CD4-positive, alpha-beta memory T cell (primary cell): ENCODE measurements at regions of chr12 and their contacts with region 1.

Region 1: DNA sequence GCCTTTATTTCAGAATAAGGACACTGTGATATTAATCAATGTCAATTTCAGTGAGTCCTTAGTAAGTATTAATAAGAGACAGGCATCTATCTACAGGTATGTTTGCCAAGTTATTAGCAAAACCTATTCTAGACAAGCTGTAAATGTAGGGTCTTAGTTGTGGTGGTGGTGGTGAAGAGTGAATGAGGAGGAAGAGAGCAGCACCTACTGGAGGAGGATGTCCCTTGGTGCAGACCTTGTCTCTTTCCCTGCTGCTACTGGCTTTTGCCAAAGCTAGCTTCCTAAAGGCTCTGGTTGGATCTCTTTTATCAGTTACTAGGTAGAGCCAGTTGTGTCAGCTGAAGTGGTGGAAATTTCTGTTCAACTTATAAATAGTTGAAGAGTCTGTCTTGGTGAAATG is 304.8 kb upstream of the ATP2B1 start:
- DNase-seq: peak in 4 of 5 donors; percentile 21 to 32 (median 29)
- H3K4me3 ChIP-seq: no peak overlapping the region
- H3K4me3 Mint-ChIP-seq: no peak overlapping the region
- H3K27ac ChIP-seq: no peak overlapping the region
- H3K27ac Mint-ChIP-seq: peak overlapping the region in 2 of 7 donors; percentile 31 to 65
- H3K4me1 ChIP-seq: peaks cover 3% of the 10 kb centered on the region
- H3K4me1 Mint-ChIP-seq: peaks cover 8 to 11% (median 10%) of the 10 kb centered on the region in 4 donors
- H3K27me3 ChIP-seq: no peaks in the 10 kb centered on the region
- H3K27me3 Mint-ChIP-seq: no peaks in the 10 kb centered on the region

Region 2: GRCh38 chr12:89603678-89604077 is 409.7 kb before region 1 on chr12:
- CTCF ChIA-PET with region 1: no interaction called
- POLR2A ChIA-PET with region 1: no interaction called
- intact Hi-C with region 1: loop called (anchors 10 kb)
- DNase-seq: no peak
- H3K4me3 ChIP-seq: no peak overlapping the region
- H3K4me3 Mint-ChIP-seq: no peak overlapping the region
- H3K27ac ChIP-seq: no peak overlapping the region
- H3K27ac Mint-ChIP-seq: peak overlapping the region in 1 of 7 donors; percentile 11
- H3K4me1 ChIP-seq: peaks cover 4% of the 10 kb centered on the region
- H3K4me1 Mint-ChIP-seq: peaks cover 5 to 15% (median 8%) of the 10 kb centered on the region in 4 donors
- H3K27me3 ChIP-seq: no peaks in the 10 kb centered on the region
- H3K27me3 Mint-ChIP-seq: no peaks in the 10 kb centered on the region

Region 3: GRCh38 chr12:90028635-90029051 is 15.2 kb after region 1 on chr12:
- CTCF ChIA-PET with region 1: no interaction called
- POLR2A ChIA-PET with region 1: no interaction called
- intact Hi-C with region 1: no loop called
- DNase-seq: peak in 2 of 5 donors; percentile 1 to 4
- H3K4me3 ChIP-seq: no peak overlapping the region
- H3K4me3 Mint-ChIP-seq: peak overlapping the region in 5 of 8 donors; percentile 14 to 42 (median 35)
- H3K27ac ChIP-seq: no peak overlapping the region
- H3K27ac Mint-ChIP-seq: peak overlapping the region; percentile 20 to 75 (median 56)
- H3K4me1 ChIP-seq: peaks cover 17% of the 10 kb centered on the region
- H3K4me1 Mint-ChIP-seq: peaks cover 11 to 16% (median 15%) of the 10 kb centered on the region in 4 donors
- H3K27me3 ChIP-seq: no peaks in the 10 kb centered on the region
- H3K27me3 Mint-ChIP-seq: no peaks in the 10 kb centered on the region